ENCODE measurements at regions of chr15 and their contacts with region 1.

Region 1: GRCh38 chr15:57340682-57341259 is 35.5 kb upstream of the CGNL1 start:
- DNase-seq: peak; percentile 43 to 44
- H3K4me3 ChIP-seq: no peak overlapping the region
- H3K27ac ChIP-seq: no peak overlapping the region
- H3K4me1 ChIP-seq: no peaks in the 10 kb centered on the region
- H3K27me3 ChIP-seq: no peaks in the 10 kb centered on the region
- CTCF ChIP-seq: peak; percentile 85 to 90 (median 88)
- POLR2A ChIP-seq: no peak

Region 2: GRCh38 chr15:57527382-57528091 is 186.8 kb after region 1 on chr15:
- intact Hi-C with region 1: loop called (anchors 5 kb)
- DNase-seq: peak in 1 of 2 donors; percentile 69
- H3K4me3 ChIP-seq: no peak overlapping the region
- H3K27ac ChIP-seq: no peak overlapping the region
- H3K4me1 ChIP-seq: peaks cover 0 to 7% of the 10 kb centered on the region in 2 donors
- H3K27me3 ChIP-seq: no peaks in the 10 kb centered on the region
- CTCF ChIP-seq: peak; percentile 63 to 87 (median 78)
- POLR2A ChIP-seq: no peak

Measured in uterus (tissue), 4 donors.